ENCODE measurements at regions of chr5 and their contacts with region 1.

Region 1: DNA sequence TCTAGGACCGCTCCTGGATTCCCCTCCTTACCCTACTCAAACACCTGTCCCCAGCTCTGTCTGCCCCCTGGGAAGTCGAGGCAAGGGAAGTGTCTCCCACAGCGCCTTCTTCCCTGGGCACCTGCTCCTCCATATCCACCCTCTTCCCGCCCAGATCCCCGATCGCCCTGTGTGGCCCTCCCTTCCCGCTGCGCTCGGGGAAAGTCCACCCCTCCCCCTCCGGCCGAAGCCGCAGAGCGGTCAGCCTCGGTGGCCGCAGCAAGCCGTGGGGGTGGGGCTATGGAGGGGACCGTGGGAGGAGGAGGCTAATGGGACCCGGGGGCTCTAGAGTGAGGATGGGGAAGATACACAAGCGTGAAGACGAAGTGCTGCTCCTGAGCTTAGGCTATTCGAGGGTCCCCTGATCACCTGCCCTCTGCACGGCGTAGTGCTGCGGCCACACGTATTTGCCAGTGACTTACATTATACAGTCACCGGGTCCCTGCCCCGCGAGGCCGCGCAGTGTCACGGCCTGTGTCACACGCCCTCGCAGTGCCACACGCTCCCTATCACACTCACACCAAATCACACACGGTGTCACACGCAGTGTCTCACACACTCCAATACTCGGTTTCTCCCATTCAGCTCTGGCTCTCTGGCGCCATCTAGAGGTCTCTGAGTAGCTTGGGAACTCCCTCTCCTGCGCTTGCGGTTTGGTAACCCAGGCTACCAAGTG is 658 bp upstream of the PCDH1 start:
- DNase-seq: peak; percentile 93
- ATAC-seq: peak; percentile 90
- H3K4me3 Mint-ChIP-seq: peak overlapping the region; percentile 59
- H3K27ac Mint-ChIP-seq: no peak overlapping the region
- H3K4me1 Mint-ChIP-seq: peaks cover 19% of the 10 kb centered on the region
- H3K27me3 Mint-ChIP-seq: peaks cover 65% of the 10 kb centered on the region

Region 2: DNA sequence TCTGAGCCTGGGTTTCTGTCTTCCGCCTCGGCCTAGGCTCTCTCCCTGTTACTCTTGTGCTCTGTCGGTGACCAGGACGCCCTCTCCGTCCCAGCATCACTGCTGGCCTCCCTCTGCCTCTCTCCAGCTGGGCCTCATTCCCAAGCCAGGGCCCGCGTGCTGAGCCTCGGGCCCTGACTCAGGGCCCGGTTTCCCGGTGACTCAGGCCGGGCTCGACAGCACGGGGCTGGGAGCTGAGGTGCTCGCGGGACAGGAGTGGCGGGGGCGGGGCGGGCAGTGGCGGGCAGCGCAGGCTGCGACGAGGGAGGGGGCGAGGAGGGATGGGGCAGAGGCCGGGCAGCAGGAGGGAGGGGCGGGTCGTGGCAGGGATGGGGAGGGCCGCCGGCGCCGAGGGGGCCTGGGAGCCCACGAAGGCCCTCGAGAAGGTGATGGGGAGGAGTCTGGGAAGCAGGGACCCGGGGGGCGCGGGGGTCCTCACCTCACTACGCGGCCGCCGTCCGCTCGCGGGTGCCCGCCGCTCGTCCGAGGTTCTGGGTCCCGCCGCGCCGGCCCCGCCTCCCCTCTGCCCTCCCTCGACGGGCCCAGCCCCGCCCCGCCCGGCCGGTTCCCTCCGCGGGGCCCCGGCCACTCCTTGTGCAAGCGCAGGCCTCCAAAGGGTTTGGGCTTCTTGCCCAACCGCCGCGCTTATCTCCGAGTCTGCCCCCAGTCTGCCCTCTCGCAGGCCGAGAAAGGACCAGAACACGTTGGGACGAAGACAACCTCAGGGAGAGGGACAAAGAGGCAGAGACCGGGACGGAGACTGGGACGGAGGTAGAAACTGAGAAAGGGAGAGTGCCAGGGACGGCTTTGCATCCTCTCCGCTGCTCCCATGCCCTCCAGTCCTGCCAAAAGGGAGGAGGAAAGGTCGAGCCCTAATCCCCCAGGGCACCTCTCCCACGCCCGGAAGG is 196.9 kb before region 1 on chr5 and contains the start of gene ARAP3:
- CTCF ChIA-PET with region 1: interaction called, 12 read pairs
- POLR2A ChIA-PET with region 1: no interaction called
- intact Hi-C with region 1: no loop called
- DNase-seq: peak; percentile 59
- ATAC-seq: peak; percentile 63
- H3K4me3 Mint-ChIP-seq: peak within 1 kb of the TSS; percentile 60
- H3K27ac Mint-ChIP-seq: peak within 1 kb of the TSS; percentile 62
- H3K4me1 Mint-ChIP-seq: peaks cover 19% of the 10 kb centered on the region
- H3K27me3 Mint-ChIP-seq: peaks cover 3% of the 10 kb centered on the region
- total RNA-seq, gene ARAP3: 3.2 TPM

Region 3: DNA sequence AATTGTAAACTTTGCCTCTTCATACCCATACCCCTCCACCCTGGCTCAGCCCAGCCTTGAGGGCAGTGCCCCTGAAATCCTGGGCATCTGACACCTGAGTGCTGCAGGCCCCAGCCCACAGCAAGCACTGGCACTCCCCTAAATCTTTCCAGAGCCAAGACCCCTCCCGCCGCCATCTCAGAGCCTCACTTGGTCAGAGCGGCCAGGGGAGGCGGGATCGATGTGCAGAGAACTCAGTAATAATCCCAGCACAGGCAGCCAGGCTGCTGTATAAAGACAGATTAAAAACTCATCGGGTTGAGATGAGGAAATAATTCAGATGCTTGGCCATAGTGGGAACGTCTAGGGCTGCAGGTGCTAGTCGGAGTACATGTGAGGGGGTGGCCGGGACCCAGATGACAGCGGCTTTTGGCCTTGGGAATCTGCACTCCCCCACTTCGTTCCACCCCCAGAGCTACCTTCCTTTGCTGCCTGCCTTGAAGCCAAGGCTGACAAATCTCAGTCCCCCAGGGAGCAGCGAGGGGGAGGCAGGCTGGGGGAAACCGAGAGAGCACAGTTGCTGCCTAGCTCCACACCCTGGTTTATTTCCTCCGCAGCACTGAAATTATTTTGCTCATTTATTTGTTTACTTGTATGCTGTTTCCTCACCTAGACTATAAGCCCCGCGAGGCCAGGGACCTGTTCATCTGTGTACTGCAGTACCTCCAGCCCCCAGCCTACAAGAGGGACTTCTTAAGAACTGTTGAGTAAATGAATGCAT is 177.3 kb before region 1 on chr5:
- CTCF ChIA-PET with region 1: interaction called, 63 read pairs
- POLR2A ChIA-PET with region 1: interaction called, 3 read pairs
- intact Hi-C with region 1: loop called (anchors 1 kb)
- DNase-seq: peak; percentile 47
- ATAC-seq: peak; percentile 46
- H3K4me3 Mint-ChIP-seq: peak overlapping the region; percentile 59
- H3K27ac Mint-ChIP-seq: no peak overlapping the region
- H3K4me1 Mint-ChIP-seq: peaks cover 20% of the 10 kb centered on the region
- H3K27me3 Mint-ChIP-seq: peaks cover 27% of the 10 kb centered on the region

Region 4: DNA sequence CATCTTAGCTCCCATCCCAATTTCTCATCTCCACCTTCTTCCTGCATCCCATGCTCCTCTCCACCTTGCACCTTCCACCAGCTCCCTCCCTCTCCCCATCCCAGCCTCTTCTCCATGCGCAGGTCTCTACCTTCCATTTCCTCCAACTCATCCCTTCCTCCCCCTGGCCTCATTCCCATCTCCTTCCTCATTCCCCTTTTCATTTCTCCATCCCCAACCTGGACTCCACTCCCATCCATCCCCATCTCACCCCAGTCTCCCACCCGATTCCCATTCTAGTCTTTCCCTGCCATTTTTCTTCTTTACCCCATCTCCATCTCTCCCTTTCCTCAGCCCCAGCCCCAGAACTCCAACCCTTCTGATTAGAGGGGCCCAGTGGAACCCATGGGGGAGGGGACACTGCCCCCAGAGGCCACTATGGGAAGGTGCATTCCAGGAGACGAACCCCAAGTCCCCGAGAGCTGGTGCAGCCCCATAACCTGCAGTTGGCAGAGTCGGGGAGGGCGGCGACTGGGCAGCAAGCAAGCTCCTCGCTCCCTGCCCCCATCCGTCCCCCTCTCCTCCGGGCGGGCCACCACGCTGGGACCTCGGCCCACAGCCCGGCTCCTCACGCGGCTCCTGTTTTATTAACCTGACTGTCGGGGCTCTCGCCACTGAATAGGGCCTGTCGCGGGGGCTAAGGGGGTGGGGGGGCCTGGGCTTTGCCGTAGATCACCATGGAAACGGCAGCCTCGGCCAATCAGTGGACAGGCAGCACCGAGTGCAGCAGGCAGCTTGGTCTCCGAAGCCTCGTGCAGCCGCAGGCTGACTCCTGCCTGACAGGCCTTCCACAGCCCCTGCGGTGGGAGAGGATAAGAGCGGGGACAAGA is 67.3 kb before region 1 on chr5:
- CTCF ChIA-PET with region 1: interaction called, 20 read pairs
- POLR2A ChIA-PET with region 1: no interaction called
- intact Hi-C with region 1: loop called (anchors 1 to 2 kb)
- DNase-seq: peak; percentile 52
- ATAC-seq: peak; percentile 83
- H3K4me3 Mint-ChIP-seq: no peak overlapping the region
- H3K27ac Mint-ChIP-seq: no peak overlapping the region
- H3K4me1 Mint-ChIP-seq: no peaks in the 10 kb centered on the region
- H3K27me3 Mint-ChIP-seq: peaks cover 41% of the 10 kb centered on the region

Region 5: DNA sequence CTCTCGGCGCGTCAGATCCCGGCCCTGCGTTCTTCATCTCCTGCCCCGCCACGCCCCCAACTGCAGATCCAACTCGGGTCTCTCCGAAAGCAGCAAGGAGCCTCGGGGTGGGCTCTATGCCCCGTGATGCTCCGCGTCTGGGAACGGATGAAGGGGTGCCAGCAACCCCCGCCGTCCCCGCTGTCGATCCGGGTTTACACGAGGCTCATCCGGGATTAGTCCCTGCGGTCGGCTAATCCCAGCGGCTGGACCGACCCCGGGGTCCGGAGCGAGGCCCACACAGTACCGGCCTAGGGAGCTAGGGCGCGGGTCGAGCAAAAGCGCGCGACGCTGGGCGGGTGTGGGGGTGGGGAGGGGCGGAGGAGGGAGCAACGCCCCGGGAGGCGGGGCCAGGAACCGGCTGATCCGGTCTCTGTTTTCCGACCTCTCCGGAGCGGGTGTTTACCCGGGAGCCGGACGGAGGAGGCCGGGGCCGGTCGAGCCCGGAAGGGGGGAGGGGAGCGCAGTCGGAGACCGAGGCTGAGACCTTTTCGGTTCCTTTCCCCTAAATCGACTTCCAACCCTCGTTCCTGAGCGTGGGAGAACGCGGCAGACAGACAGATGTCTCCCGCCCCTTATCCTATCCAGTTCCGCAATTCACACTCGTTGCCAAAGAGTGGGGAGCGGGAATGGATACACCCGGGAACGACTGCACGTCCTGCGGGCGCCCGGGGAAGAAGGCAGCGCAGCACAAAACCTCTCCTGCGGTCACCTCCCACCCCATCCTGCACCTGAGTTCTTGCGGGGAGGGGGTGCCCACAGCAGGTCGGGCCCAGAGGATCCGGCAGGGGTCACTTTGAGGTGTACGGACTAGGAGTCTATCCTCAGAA is 29.3 kb before region 1 on chr5:
- CTCF ChIA-PET with region 1: interaction called, 6 read pairs
- POLR2A ChIA-PET with region 1: no interaction called
- intact Hi-C with region 1: loop called in 1 of 2 experiments (anchors 1 kb)
- DNase-seq: peak; percentile 87
- ATAC-seq: peak; percentile 80
- H3K4me3 Mint-ChIP-seq: peak overlapping the region; percentile 78
- H3K27ac Mint-ChIP-seq: peak overlapping the region; percentile 86
- H3K4me1 Mint-ChIP-seq: peaks cover 15% of the 10 kb centered on the region
- H3K27me3 Mint-ChIP-seq: peaks cover 2% of the 10 kb centered on the region

Region 6: GRCh38 chr5:141914199-141914743 is 35.4 kb after region 1 on chr5:
- CTCF ChIA-PET with region 1: interaction called, 13 read pairs
- POLR2A ChIA-PET with region 1: interaction called, 3 read pairs
- intact Hi-C with region 1: no loop called
- DNase-seq: peak; percentile 43
- ATAC-seq: peak; percentile 69
- H3K4me3 Mint-ChIP-seq: no peak overlapping the region
- H3K27ac Mint-ChIP-seq: no peak overlapping the region
- H3K4me1 Mint-ChIP-seq: peaks cover 8% of the 10 kb centered on the region
- H3K27me3 Mint-ChIP-seq: peaks cover 26% of the 10 kb centered on the region

Region 7: DNA sequence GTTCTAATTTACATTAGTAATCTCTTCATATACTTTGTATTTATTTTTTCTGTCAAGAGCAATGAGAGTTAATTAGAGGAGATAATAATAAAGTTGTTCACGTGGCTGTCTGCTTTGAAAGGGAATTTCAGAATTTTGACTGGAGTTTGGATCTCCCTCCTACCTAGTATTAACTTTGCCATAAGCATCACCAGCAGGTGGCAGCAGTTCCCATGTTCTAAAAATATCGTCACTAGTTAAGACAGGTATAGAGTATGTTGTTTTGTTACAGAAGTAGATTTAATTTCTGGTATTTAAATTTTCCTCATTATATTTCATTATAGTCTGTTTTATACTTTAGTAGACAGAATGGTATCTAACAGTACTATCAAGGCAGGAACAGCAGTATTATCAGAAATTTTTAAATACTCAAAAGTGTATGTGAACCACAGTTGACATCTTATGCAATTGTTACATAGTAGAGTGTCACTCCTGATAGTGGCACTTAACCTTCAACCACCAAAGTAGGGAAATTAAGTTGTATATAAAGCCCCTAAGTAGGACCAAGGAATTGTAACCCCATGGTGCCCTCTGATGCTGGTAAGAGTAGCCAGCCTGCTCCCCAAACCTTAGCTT is 113.6 kb after region 1 on chr5:
- CTCF ChIA-PET with region 1: no interaction called
- POLR2A ChIA-PET with region 1: no interaction called
- intact Hi-C with region 1: no loop called
- DNase-seq: peak; percentile 89
- ATAC-seq: peak; percentile 88
- H3K4me3 Mint-ChIP-seq: no peak overlapping the region
- H3K27ac Mint-ChIP-seq: peak overlapping the region; percentile 19
- H3K4me1 Mint-ChIP-seq: no peaks in the 10 kb centered on the region
- H3K27me3 Mint-ChIP-seq: no peaks in the 10 kb centered on the region

Measured in activated CD4-positive, alpha-beta T cell treated with anti-CD3 and anti-CD28 coated beads for 36 hours (primary cell).